MCF 10A (cell line): ENCODE measurements at regions of chr11 and their contacts with region 1.

Region 1: GRCh38 chr11:65919146-65920033 is at the start of gene DRAP1:
- DNase-seq: peak; percentile 97
- H3K4me3 Mint-ChIP-seq: peak within 1 kb of the TSS; percentile 89
- H3K27ac Mint-ChIP-seq: peak within 1 kb of the TSS; percentile 81
- H3K4me1 Mint-ChIP-seq: peaks cover 36% of the 10 kb centered on the region
- H3K27me3 Mint-ChIP-seq: no peaks in the 10 kb centered on the region
- CTCF ChIP-seq: no peak
- total RNA-seq, gene DRAP1: 162 and 167 TPM in 2 replicates

Region 2: DNA sequence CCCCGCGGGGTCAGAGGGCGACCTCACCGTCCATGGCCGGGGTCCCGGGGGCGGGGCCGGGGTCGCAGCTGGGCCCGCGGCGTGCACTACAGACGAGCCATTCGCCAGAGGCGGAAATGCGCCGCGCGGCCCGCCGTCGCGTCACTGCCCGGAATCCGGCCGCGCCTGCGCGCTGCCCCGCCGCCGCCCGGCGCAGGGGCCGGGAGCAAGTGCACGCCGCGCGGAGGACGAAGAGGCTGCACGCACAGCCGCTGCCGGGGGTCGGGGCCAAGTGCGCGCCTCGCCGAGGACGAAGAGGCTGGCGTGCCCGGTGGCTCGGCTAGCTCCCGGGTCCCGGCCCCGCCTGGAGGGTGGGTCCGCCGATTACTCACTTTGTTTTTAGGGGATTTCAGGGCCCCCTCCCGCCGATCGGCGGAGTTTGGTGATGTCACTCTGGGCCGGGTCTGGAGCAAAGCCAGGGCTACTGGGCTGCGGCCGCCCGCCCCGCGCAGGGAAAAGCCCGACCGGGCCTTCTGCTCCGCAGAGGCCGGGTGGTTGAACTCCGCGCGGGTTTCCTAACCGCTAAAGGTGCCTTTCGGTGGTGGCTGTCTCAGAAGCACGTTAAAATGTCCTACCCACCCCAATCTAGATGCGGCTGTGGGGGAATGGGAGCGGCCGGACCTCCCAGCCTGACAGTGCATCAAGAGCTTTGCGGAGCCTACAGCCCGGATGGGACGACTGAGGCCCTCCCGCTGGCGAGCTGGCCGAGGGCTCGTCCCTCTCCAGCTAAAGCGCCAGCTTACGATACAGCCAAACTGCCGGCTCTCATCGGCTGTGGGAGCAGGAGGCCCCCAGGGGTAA is 256.4 kb before region 1 on chr11 and contains the start of gene RELA:
- CTCF ChIA-PET with region 1: no interaction called
- POLR2A ChIA-PET with region 1: interaction called, 12 read pairs
- intact Hi-C with region 1: loop called (anchors 5 kb)
- DNase-seq: peak; percentile 91
- H3K4me3 Mint-ChIP-seq: peak within 1 kb of the TSS; percentile 74
- H3K27ac Mint-ChIP-seq: peak within 1 kb of the TSS; percentile 73
- H3K4me1 Mint-ChIP-seq: peaks cover 12% of the 10 kb centered on the region
- H3K27me3 Mint-ChIP-seq: no peaks in the 10 kb centered on the region
- CTCF ChIP-seq: no peak
- total RNA-seq, gene RELA: 82.1 and 83.0 TPM in 2 replicates

Region 3: DNA sequence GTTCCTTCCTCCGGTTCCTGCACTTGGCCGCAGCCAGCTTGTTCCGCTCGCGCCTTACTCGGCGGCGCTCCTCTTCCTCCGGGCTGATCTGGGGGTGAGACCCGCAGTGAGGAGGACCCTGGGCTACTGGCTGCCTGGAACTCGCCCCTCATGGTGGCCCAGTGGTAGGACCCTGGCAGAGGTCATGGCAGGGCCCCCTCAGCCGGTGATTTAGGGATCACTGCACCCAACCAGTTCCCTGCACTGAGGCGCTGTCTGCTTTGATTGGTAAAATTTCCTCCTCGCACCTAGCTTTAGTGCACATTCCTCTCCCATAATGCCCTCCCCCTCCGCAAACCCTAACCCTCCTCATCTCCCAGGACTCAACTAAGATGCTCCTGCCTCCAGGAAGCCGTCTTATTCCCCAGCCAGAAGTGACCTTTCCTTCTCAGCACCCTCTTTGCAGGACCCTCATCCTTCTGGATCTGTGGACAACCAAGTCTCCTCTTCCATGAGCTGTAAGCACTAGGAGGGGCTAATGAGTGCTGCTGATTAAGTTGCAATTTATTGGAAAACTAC is 25.3 kb before region 1 on chr11:
- CTCF ChIA-PET with region 1: interaction called, 12 read pairs
- POLR2A ChIA-PET with region 1: interaction called, 122 read pairs
- intact Hi-C with region 1: no loop called
- DNase-seq: no peak
- H3K4me3 Mint-ChIP-seq: no peak overlapping the region
- H3K27ac Mint-ChIP-seq: peak overlapping the region; percentile 23
- H3K4me1 Mint-ChIP-seq: peaks cover 48% of the 10 kb centered on the region
- H3K27me3 Mint-ChIP-seq: no peaks in the 10 kb centered on the region
- CTCF ChIP-seq: no peak

Region 4: GRCh38 chr11:65900125-65900898 is 19.1 kb before region 1 on chr11 and contains the start of gene FOSL1:
- CTCF ChIA-PET with region 1: interaction called, 6 read pairs
- POLR2A ChIA-PET with region 1: interaction called, 122 read pairs
- intact Hi-C with region 1: loop called (anchors 1 kb)
- DNase-seq: peak; percentile 97
- H3K4me3 Mint-ChIP-seq: peak within 1 kb of the TSS; percentile 96
- H3K27ac Mint-ChIP-seq: peak within 1 kb of the TSS; percentile 89
- H3K4me1 Mint-ChIP-seq: peaks cover 56% of the 10 kb centered on the region
- H3K27me3 Mint-ChIP-seq: no peaks in the 10 kb centered on the region
- CTCF ChIP-seq: no peak
- total RNA-seq, gene FOSL1: 95.3 and 124 TPM in 2 replicates

Region 5: GRCh38 chr11:65988791-65989592 is 69.6 kb after region 1 on chr11:
- CTCF ChIA-PET with region 1: no interaction called
- POLR2A ChIA-PET with region 1: no interaction called
- intact Hi-C with region 1: loop called (anchors 1 kb)
- DNase-seq: peak; percentile 96
- H3K4me3 Mint-ChIP-seq: no peak overlapping the region
- H3K27ac Mint-ChIP-seq: no peak overlapping the region
- H3K4me1 Mint-ChIP-seq: peaks cover 5% of the 10 kb centered on the region
- H3K27me3 Mint-ChIP-seq: no peaks in the 10 kb centered on the region
- CTCF ChIP-seq: peak; percentile 93